ENCODE measurements at regions of chr12 and their contacts with region 1.

Region 1: DNA sequence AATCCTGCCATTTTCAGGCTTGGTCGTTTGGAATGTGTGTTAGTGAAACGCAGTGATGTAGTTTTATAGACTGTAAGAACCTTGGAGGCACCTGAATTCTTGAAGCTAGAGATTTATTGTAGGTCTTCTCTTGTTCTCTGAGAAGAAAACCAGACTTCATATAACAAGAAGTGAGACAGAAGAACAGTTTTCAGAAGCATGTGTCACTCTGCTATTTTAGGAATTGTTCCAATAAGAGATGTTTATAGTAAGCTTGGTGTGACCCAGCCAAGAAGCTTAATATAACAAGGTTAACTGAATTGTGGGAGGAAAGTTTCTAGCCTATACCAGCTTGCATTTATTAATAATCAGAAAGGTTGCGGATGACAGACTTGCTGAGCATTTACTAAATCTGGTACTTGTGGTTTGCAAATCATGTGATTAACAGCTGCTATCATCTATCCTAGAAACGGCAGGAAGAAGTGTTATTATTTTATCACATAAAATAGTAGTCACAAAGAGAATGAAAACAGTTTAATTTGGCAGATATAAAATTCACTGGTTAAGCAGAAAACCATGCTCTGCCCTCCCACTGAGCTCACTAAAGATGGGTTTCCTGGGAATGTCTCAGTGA is 49.2 kb upstream of the BCAT1 start:
- DNase-seq: no peak
- H3K4me3 ChIP-seq: no peak overlapping the region
- H3K27ac ChIP-seq: no peak overlapping the region
- H3K4me1 ChIP-seq: 0 out of 7 replicates have a peak, but pooled peaks cover 0 to 2% (median 0%) of the 10 kb centered on the region in 4 experiments
- H3K27me3 ChIP-seq: no peaks in the 10 kb centered on the region
- CTCF ChIP-seq: no peak
- EP300 ChIP-seq: no peak
- POLR2A ChIP-seq: no peak
- RAD21 ChIP-seq: no peak

Region 2: DNA sequence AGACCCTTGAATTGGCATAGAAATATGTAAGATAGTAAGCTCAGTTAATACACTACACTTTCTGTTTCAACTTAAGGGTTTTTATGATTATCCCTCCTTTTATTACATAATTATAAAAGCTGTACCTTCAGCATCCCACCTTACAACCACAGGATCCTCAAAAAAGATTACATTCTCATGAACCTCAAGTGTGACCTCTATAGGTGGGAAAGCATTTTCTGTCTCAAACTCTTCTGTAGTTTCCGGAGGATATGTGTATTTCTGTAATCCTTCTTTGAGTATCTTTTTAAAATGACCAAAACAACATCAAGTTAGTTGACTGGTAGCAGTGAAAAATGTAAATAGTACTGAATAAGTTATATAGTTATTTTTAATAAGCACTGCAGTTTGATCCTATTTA is 120.9 kb after region 1 on chr12:
- CTCF ChIA-PET with region 1: interaction called, 57 read pairs
- POLR2A ChIA-PET with region 1: no interaction called
- DNase-seq: no peak
- H3K4me3 ChIP-seq: no peak overlapping the region
- H3K27ac ChIP-seq: no peak overlapping the region
- H3K4me1 ChIP-seq: no peaks in the 10 kb centered on the region
- H3K27me3 ChIP-seq: no peaks in the 10 kb centered on the region
- CTCF ChIP-seq: peak in 1 of 3 experiments; percentile 21; a peak in 2 of 4 replicates
- EP300 ChIP-seq: no peak
- POLR2A ChIP-seq: no peak
- RAD21 ChIP-seq: peak; percentile 39 to 43

Region 3: DNA sequence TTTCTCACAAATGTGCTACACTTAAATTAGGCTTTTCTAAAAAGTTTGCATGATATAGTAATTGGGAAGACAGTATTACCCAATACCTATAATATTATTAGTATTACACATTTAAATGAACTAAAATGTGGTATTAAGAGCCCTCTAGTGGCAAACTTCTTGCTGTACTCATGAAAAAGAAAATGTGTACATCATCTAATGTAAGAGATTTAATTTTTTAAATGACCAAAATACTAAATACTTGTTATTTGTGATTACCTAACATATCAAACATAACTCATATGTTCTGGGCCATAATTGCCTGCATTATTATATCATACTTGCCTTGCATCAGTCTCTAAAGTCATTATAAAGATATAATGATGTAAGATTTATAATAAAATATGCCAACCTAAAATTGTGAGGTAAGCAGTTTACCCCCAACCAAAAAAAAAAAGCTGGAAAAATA is 132.7 kb after region 1 on chr12:
- CTCF ChIA-PET with region 1: interaction called, 50 read pairs
- POLR2A ChIA-PET with region 1: no interaction called
- DNase-seq: no peak
- H3K4me3 ChIP-seq: no peak overlapping the region
- H3K27ac ChIP-seq: no peak overlapping the region
- H3K4me1 ChIP-seq: no peaks in the 10 kb centered on the region
- H3K27me3 ChIP-seq: no peaks in the 10 kb centered on the region
- CTCF ChIP-seq: peak in 2 of 3 experiments; percentile 19 to 25; a peak in 2 of 4 replicates
- EP300 ChIP-seq: no peak
- POLR2A ChIP-seq: no peak
- RAD21 ChIP-seq: peak; percentile 50 to 66

Measured in H1 (cell line).